ENCODE measurements at regions of chr16 and their contacts with region 1.

Region 1: DNA sequence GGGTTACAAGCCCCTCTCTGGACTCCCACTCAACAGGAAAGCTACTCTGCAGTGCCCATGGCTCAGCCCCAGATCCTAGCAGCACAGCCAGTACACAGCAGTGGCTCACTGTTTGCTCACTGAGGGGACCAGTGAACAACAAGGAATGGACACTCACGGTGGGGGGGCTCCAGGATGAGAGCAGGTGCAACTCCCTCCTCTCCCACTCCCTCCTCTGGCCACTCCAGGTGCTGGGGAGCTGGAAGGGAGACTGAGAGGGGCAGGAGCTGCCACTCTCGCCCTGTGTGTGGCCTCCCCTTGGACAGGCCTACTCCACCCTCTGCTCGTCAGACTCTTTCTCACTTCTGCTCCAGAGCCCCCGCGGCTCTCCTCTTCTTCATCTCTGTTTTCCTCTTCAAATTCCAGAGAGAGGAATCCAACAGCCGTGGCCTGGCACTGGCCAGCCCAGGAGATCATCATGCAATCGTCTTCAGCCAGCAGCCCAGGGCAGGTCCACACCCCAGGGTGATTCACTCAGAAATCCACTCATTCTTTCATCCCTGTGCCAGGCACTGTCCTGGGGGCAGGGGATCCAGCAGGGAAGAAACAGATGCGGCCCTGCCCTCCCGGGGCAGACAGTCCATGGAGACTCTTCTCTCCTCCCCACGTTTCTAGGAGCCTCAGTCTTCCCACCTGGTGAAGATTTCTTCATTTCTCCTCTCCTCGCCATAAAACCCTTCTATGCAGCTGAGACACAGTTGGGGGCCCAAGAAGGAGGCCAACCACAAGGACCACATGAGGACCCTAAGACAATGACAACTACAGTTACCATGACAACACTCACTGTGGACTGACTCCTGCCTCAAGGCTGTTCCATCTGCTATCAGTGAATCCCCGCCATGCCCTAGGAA is 30.7 kb downstream of the CFAP20 start:
- DNase-seq: no peak
- ATAC-seq: no peak
- H3K4me3 Mint-ChIP-seq: no peak overlapping the region
- H3K27ac Mint-ChIP-seq: no peak overlapping the region
- H3K4me1 Mint-ChIP-seq: peaks cover 19% of the 10 kb centered on the region
- H3K27me3 Mint-ChIP-seq: no peaks in the 10 kb centered on the region

Region 2: GRCh38 chr16:58074657-58075056 is 23.8 kb before region 1 on chr16:
- CTCF ChIA-PET with region 1: no interaction called
- DNase-seq: no peak
- ATAC-seq: no peak
- H3K4me3 Mint-ChIP-seq: no peak overlapping the region
- H3K27ac Mint-ChIP-seq: no peak overlapping the region
- H3K4me1 Mint-ChIP-seq: no peaks in the 10 kb centered on the region
- H3K27me3 Mint-ChIP-seq: no peaks in the 10 kb centered on the region

Region 3: GRCh38 chr16:58127033-58127556 is 28.6 kb after region 1 on chr16:
- CTCF ChIA-PET with region 1: interaction called, 12 read pairs
- DNase-seq: peak; percentile 64
- ATAC-seq: peak; percentile 17
- H3K4me3 Mint-ChIP-seq: peak overlapping the region; percentile 85
- H3K27ac Mint-ChIP-seq: peak overlapping the region; percentile 81
- H3K4me1 Mint-ChIP-seq: peaks cover 53% of the 10 kb centered on the region
- H3K27me3 Mint-ChIP-seq: no peaks in the 10 kb centered on the region